Activated naive CD8-positive, alpha-beta T cell treated with anti-CD3 and anti-CD28 coated beads, Interleukin-2, amount 10 ng/mL, durations not matched to agents 7 days and 5 days (primary cell): ENCODE measurements at regions of chr10 and their contacts with region 1.

Region 1: GRCh38 chr10:3935141-3935540 is 150.1 kb upstream of the KLF6 start:
- DNase-seq: no peak
- ATAC-seq: peak; percentile 89
- H3K4me3 Mint-ChIP-seq: peak overlapping the region; percentile 76
- H3K27ac Mint-ChIP-seq: peak overlapping the region; percentile 98
- H3K4me1 Mint-ChIP-seq: peaks cover 50% of the 10 kb centered on the region
- H3K27me3 Mint-ChIP-seq: no peaks in the 10 kb centered on the region

Region 2: GRCh38 chr10:3805791-3806461 is 129.2 kb before region 1 on chr10:
- POLR2A ChIA-PET with region 1: interaction called, 12 read pairs
- DNase-seq: no peak
- ATAC-seq: no peak
- H3K4me3 Mint-ChIP-seq: peak overlapping the region; percentile 77
- H3K27ac Mint-ChIP-seq: peak overlapping the region; percentile 98
- H3K4me1 Mint-ChIP-seq: peaks cover 57% of the 10 kb centered on the region
- H3K27me3 Mint-ChIP-seq: no peaks in the 10 kb centered on the region